ENCODE measurements at regions of chr6 and their contacts with region 1.

Region 1: GRCh38 chr6:129730477-129731165 is 20.6 kb upstream of the ARHGAP18 start:
- DNase-seq: peak; percentile 44
- ATAC-seq: peak; percentile 65
- H3K4me3 Mint-ChIP-seq: no peak overlapping the region
- H3K27ac Mint-ChIP-seq: peak overlapping the region; percentile 40
- H3K4me1 Mint-ChIP-seq: peaks cover 15% of the 10 kb centered on the region
- H3K27me3 Mint-ChIP-seq: no peaks in the 10 kb centered on the region
- CTCF ChIP-seq: peak; percentile 83

Region 2: DNA sequence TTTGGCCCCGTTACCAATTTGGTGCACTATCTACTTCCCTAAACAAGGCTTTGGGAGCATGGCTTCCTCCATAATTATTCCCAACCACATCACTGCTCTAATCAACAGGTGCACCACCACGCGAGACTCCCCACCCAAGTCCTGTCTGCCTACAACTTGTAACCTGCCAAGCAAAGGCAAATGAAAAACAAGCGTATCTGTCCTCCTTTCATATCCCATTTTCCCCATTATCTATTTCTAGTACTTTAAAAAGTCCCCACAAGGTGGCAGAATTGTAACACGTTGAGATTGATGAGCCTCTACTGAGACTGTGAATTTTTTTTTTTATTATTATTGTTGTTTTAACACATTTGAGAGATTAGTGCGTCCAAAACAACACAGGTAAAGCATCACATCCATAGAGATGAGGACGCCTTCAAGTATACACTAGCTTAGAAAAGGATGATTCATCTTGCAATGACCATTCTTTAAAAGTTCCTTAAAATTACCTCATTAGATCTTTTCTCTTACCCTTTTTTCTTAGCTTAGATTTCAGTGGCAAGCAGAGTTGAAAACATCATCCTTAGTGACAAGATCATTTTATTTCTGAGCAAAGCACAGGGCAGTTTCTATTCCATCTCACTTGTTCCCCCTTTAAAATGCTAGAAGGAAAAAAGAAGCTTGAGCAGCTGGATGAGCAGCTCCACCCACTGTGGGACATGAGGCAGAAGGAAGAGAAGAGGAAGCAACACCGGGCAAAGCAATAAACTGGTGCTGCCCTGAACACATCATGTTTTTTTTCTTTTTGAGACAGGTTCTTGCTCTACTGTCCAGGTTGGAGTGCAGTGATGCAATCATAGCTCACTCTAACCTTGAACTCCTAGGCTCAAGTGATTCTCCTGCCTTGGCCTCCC is 231.4 kb before region 1 on chr6:
- CTCF ChIA-PET with region 1: interaction called, 14 read pairs
- POLR2A ChIA-PET with region 1: no interaction called
- intact Hi-C with region 1: loop called (anchors 5 kb)
- DNase-seq: no peak
- ATAC-seq: peak; percentile 65
- H3K4me3 Mint-ChIP-seq: peak overlapping the region; percentile 46
- H3K27ac Mint-ChIP-seq: peak overlapping the region; percentile 85
- H3K4me1 Mint-ChIP-seq: peaks cover 58% of the 10 kb centered on the region
- H3K27me3 Mint-ChIP-seq: no peaks in the 10 kb centered on the region
- CTCF ChIP-seq: peak; percentile 76

Region 3: DNA sequence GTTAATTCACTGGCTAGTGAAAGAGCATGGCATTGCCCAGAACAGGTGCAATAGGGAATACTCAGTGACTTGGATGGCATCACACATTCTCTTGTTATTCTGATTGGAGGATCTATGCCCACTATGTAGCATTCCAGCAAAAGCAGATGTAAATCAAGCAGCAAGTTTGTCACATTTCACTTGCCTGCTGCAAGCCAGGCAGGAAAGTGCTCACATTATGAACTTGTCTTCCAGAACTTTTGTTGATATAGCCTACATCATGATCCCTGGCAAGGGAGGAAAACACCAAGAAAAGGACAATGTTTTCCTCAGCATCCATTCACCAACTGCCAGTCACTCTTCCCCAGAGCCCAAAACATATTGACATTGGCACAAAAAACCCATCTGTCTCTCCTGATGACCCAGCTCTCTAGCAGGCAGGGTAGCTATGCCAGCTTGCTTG is 98.4 kb before region 1 on chr6:
- CTCF ChIA-PET with region 1: interaction called, 10 read pairs
- POLR2A ChIA-PET with region 1: no interaction called
- intact Hi-C with region 1: no loop called
- DNase-seq: no peak
- ATAC-seq: no peak
- H3K4me3 Mint-ChIP-seq: no peak overlapping the region
- H3K27ac Mint-ChIP-seq: no peak overlapping the region
- H3K4me1 Mint-ChIP-seq: peaks cover 7% of the 10 kb centered on the region
- H3K27me3 Mint-ChIP-seq: no peaks in the 10 kb centered on the region
- CTCF ChIP-seq: no peak

Region 4: DNA sequence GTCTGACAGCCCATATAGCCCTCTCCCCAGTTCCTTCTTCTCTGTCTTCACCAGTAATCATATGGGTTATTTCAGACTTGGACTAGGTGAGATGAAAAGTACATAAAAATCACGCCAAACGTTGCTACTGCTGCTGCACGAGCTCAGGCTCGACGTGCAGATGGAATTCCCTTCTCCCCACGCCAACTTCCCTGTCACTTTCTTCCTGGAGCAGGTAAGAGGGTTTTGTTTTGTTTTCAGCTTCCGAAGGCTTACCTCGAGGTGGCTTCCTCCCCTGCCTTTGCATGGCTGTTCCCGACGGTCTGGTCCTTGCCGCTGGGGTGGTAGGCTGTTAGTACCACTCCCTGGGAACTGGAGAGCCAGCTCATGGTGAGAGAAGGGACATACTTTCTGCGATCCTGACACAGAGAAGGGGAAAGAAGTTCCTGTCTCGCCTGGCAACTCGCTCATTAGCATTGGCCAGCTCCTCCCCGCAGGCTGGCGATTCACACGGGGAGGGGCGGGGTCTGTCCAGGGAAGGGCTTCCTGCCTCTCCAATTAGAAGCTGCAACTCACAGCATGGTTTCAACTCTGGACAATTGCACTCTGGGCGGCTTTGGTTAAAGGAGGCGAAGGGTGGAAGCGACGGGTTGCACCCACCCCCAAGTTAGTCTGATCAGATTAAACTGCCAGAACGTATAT is 20.7 kb before region 1 on chr6 and contains the start of gene ARHGAP18:
- CTCF ChIA-PET with region 1: interaction called, 17 read pairs
- POLR2A ChIA-PET with region 1: no interaction called
- intact Hi-C with region 1: no loop called
- DNase-seq: peak; percentile 82
- ATAC-seq: peak; percentile 97
- H3K4me3 Mint-ChIP-seq: peak within 1 kb of the TSS; percentile 92
- H3K27ac Mint-ChIP-seq: peak within 1 kb of the TSS; percentile 80
- H3K4me1 Mint-ChIP-seq: peaks cover 37% of the 10 kb centered on the region
- H3K27me3 Mint-ChIP-seq: peaks cover 7% of the 10 kb centered on the region
- CTCF ChIP-seq: no peak
- total RNA-seq, gene ARHGAP18: 8.2 to 9.6 TPM

Region 5: GRCh38 chr6:130020907-130021629 is 290.4 kb after region 1 on chr6:
- CTCF ChIA-PET with region 1: interaction called, 10 read pairs
- POLR2A ChIA-PET with region 1: no interaction called
- intact Hi-C with region 1: no loop called
- DNase-seq: peak; percentile 88
- ATAC-seq: peak; percentile 73
- H3K4me3 Mint-ChIP-seq: peak overlapping the region; percentile 94
- H3K27ac Mint-ChIP-seq: peak overlapping the region; percentile 96
- H3K4me1 Mint-ChIP-seq: peaks cover 48% of the 10 kb centered on the region
- H3K27me3 Mint-ChIP-seq: no peaks in the 10 kb centered on the region
- CTCF ChIP-seq: peak; percentile 59